Heart right ventricle (tissue), 16 donors: ENCODE measurements at regions of chr2 and their contacts with region 1.

Region 1: DNA sequence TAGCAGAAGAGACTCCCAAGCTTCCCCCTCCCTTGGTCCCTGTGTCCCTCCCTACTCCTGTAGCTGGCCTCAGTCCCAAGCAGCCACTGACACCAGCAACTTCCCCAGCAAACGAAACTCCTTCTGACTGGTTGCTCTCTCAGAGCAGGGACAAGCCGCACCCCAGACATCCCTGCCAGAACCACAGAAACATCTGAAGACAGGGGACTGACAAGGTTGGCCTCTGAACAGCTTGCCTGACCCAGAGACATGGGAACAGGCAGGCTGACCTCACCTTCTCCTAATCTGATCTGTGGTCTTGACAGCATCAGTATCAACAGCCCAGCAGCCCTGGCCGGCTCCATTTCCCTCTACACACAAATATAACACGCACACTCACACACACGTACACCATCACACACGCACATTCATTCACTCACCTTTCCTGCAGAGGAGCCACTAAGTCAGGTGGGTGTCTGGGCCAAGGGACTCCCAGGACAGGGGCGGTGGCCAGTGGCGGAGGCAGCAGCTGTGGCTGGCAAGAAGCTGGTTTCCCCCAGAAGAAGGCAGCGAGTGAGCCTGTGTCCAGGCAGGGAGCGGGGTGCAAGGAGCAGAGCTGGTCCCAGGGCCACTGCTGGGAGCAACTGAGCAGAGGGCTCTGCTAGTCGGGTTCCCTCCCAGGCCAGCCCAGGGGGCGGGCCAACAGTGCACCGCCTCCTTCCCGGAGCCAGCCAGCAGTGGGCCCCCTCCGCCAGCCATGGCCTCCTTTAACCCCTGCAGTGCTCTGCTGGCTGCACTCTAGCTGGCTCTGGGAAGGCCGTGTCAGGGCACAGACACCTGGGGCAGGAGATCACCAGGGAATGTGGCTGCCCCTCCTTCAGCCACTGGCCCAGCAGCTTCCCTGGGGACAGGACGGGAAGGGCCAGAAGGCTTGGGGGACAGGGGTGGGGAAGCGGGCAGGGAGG is 59.1 kb downstream of the TNS1 start:
- DNase-seq: peak; percentile 90 to 91
- ATAC-seq: peak; percentile 86 to 92 (median 90)
- H3K4me3 ChIP-seq: peak overlapping the region; percentile 54 to 98 (median 79)
- H3K27ac ChIP-seq: peak overlapping the region; percentile 84 to 99 (median 96)
- H3K4me1 ChIP-seq: peaks cover 24 to 80% (median 53%) of the 10 kb centered on the region in 9 donors
- H3K27me3 ChIP-seq: no peaks in the 10 kb centered on the region
- CTCF ChIP-seq: peak; percentile 9 to 70 (median 46)

Region 2: DNA sequence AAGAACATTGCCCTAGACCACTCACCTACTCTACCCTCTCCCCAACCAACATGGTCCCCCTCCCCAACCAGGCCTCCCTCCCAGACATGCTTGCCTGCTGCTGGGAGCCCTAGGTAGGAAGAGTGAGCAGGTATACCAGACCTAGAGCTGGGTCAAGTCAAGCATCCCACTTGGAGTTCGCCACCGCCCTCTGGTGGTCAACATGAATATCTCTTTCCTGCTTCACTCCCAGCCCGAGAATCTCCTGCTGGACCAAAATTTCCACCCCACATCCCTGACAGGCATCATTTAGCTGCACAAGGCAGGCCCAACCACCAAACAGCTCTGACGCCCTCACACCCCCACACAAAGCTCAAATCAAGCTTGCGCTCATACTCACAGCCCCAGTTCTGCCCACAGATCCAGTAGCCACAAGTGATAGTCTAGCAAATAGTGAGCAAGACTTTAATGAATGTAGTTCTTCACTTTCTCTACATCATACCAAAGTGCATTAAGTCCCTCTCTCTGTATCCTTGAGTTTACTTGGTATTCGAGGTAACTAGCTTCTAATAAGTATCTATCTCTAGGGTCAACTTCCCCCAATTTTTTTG is 56.9 kb before region 1 on chr2:
- intact Hi-C with region 1: loop called in 5 of 10 experiments (anchors 5 to 10 kb)
- DNase-seq: peak; percentile 72 to 82
- ATAC-seq: peak in 7 of 8 donors; percentile 18 to 67 (median 47)
- H3K4me3 ChIP-seq: no peak overlapping the region
- H3K27ac ChIP-seq: peak overlapping the region in 7 of 10 donors; percentile 4 to 83 (median 57)
- H3K4me1 ChIP-seq: peaks cover 25 to 69% (median 57%) of the 10 kb centered on the region in 9 donors
- H3K27me3 ChIP-seq: no peaks in the 10 kb centered on the region
- CTCF ChIP-seq: peak; percentile 73 to 89 (median 81)

Region 3: DNA sequence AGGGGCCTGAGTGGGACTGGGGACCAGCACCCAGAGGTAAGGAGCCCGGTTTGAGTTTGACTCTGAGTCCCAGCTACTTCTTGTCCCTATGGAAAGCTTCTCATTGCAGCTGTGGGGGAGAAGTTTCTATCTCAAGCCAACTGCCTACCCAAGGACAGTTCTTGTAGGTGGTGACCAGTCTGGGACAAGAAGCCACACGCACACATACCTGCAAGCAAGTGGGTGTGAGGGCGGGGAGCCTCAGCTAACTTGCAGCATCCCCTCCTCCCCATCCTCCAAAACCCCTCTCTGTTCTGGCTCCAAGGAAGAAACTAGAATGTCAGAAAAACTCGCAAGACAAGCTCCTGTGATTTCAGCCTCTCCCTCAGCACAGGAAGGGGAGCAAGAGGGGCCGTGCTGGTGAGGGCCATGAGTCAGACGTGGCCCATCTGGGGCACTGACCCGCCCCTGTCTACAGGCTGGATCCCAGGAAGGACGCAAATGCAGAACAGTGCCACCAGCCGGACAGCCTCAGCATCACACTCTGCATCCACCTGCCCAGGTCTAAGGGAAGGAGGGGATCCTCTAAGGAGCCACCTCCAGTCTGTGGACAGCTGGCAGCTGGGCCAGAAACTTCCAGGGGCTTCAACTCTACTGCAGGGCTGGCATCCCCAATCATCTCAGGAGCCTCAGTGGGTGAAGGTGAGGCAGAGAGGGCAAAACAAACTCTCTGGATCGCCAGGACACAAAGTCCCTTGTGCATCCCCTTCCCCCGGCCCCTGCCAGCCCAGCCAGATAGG is 44.3 kb before region 1 on chr2:
- intact Hi-C with region 1: loop called in 9 of 10 experiments (anchors 2 to 10 kb)
- DNase-seq: peak in 1 of 2 donors; percentile 68
- ATAC-seq: peak in 7 of 8 donors; percentile 3 to 56 (median 17)
- H3K4me3 ChIP-seq: no peak overlapping the region
- H3K27ac ChIP-seq: peak overlapping the region; percentile 9 to 99 (median 93)
- H3K4me1 ChIP-seq: peaks cover 60 to 83% (median 77%) of the 10 kb centered on the region in 9 donors
- H3K27me3 ChIP-seq: no peaks in the 10 kb centered on the region
- CTCF ChIP-seq: peak; percentile 28 to 72 (median 63)

Region 4: GRCh38 chr2:217905395-217905794 is 38.3 kb before region 1 on chr2:
- intact Hi-C with region 1: loop called in 9 of 10 experiments (anchors 2 to 5 kb)
- DNase-seq: peak; percentile 72 to 73
- ATAC-seq: peak in 7 of 8 donors; percentile 1 to 48 (median 14)
- H3K4me3 ChIP-seq: peak overlapping the region in 8 of 10 donors; percentile 3 to 29 (median 16)
- H3K27ac ChIP-seq: peak overlapping the region; percentile 83 to 99 (median 95)
- H3K4me1 ChIP-seq: peaks cover 86 to 100% (median 100%) of the 10 kb centered on the region in 9 donors
- H3K27me3 ChIP-seq: no peaks in the 10 kb centered on the region
- CTCF ChIP-seq: no peak

Region 5: GRCh38 chr2:217978536-217979165 is 34.9 kb after region 1 on chr2:
- intact Hi-C with region 1: loop called in 2 of 10 experiments (anchors 5 kb)
- DNase-seq: no peak
- ATAC-seq: peak; percentile 23 to 57 (median 38)
- H3K4me3 ChIP-seq: peak overlapping the region; percentile 36 to 70 (median 60)
- H3K27ac ChIP-seq: peak overlapping the region; percentile 67 to 90 (median 86)
- H3K4me1 ChIP-seq: peaks cover 20 to 94% (median 68%) of the 10 kb centered on the region in 9 donors
- H3K27me3 ChIP-seq: no peaks in the 10 kb centered on the region
- CTCF ChIP-seq: no peak

Region 6: DNA sequence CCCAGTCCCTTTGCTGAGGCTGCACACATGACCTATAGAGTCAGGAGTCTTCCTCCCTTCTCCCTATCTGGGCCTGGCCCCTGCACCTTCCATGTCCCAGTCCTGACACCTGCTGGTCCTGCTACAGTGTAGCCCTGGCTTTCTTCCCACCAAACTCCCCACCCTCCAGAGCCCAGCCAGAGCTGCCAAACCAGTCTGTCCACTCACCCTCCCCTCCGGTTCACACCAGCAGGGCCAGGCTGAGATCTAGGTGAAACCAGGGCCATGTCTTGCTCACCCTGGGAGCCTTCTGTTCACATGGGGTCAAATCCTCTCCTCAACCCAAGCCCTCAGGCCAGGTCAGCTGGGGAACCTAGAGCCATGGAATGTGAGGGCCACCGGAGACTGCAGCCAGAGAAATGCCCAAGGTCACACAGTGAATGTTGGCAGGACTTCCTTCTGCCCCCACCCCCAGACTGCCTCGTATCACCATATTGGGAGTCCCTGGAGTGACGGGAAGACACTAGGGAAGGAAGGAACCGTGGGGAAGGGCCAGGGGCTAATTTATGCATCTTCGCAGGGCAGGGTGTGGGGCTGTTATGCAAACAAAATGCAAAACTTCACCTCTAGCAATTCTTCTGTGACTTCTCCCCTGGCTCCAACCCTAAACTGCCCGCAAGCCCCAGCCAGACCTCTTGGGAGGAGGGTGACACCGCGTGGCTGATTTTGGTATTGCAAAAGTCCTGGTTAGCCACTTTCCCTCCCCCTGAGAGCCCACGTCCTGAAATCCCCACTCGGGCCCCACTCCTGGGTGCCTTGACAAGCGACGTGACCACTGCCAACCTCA is 44.5 kb after region 1 on chr2:
- intact Hi-C with region 1: loop called in 9 of 10 experiments (anchors 1 to 5 kb)
- DNase-seq: peak; percentile 84 to 91
- ATAC-seq: peak; percentile 78 to 91 (median 88)
- H3K4me3 ChIP-seq: peak overlapping the region in 2 of 10 donors; percentile 9 to 10
- H3K27ac ChIP-seq: peak overlapping the region; percentile 19 to 90 (median 75)
- H3K4me1 ChIP-seq: peaks cover 13 to 63% (median 38%) of the 10 kb centered on the region in 9 donors
- H3K27me3 ChIP-seq: no peaks in the 10 kb centered on the region
- CTCF ChIP-seq: peak; percentile 83 to 92 (median 90)